Heart left ventricle (tissue), 16 donors: ENCODE measurements at regions of chrX and their contacts with region 1.

Region 1: DNA sequence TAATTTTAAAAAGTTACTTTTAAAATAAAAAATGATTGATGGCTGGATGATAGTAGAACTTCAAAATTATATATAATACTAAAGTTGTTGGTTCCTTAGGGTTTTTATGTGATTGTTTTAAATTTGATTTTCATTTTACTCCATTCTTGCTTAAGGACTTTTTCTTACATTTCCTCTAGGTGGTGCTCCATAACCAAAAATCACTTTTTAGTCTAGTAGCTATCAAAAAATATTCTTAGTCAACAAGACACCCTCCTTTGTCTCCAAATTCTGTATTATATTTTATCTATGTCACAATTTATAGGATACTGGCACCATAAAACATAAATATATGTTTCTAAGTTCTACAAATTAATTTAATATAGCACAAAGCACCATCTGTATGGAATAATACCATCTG is 67.2 kb upstream of the BRWD3 start:
- DNase-seq: no peak
- ATAC-seq: no peak
- H3K4me3 ChIP-seq: no peak overlapping the region
- H3K27ac ChIP-seq: no peak overlapping the region
- H3K4me1 ChIP-seq: no peaks in the 10 kb centered on the region
- H3K27me3 ChIP-seq: no peaks in the 10 kb centered on the region
- CTCF ChIP-seq: peak; percentile 23 to 57 (median 40)
- POLR2A ChIP-seq: no peak

Region 2: DNA sequence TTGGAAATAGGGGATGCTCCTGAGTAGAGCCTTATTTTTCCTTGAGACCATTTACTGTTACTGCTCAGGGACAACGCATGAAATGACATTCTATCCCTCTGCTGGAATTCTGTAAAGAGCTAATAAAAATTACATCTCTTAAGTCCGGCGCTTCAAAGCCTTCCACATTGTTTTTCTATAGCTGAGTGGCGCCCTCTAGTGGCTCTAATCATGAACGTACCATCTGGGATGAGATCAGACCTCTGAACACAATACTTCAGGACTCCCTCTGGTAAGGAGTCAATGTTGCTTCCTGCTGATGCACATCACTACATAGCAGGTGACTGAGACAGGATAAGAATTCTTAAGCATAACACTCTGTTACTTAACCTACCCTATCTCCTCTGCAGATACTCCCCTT is 318.8 kb after region 1 on chrX:
- intact Hi-C with region 1: loop called in 3 of 10 experiments (anchors 5 to 10 kb)
- DNase-seq: peak in 3 of 5 donors; percentile 20 to 42 (median 27)
- ATAC-seq: peak in 3 of 4 donors; percentile 29 to 55 (median 46)
- H3K4me3 ChIP-seq: no peak overlapping the region
- H3K27ac ChIP-seq: no peak overlapping the region
- H3K4me1 ChIP-seq: peaks cover 0 to 2% (median 0%) of the 10 kb centered on the region in 12 donors
- H3K27me3 ChIP-seq: no peaks in the 10 kb centered on the region
- CTCF ChIP-seq: peak; percentile 35 to 79 (median 58)
- POLR2A ChIP-seq: no peak